ENCODE measurements at regions of chr4 and their contacts with region 1.

Region 1: GRCh38 chr4:93852680-93853079 is 24.1 kb downstream of the ATOH1 start:
- DNase-seq: no peak
- H3K4me3 ChIP-seq: no peak overlapping the region
- H3K27ac ChIP-seq: no peak overlapping the region
- H3K4me1 ChIP-seq: no peaks in the 10 kb centered on the region
- H3K27me3 ChIP-seq: peaks cover 8% of the 10 kb centered on the region
- CTCF ChIP-seq: no peak

Region 2: DNA sequence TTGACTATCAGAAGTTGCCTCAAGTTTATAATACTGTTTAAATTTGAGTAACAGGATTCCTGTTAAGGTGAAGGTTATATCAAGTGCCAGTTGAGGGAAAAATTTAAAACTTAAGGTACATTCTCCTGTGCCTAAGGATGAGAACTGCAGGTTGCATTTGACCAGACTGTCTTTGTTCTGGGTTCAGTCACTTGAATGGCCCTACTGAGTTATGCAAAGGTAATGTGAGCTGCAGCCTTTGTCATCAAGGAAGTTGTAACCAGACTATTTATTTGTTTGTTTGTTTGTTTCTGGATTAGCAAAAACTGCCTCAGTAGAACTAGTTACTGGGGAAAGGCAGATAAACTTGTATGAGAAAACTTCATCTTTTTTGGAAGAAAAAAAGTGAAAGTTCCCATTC is 107.8 kb after region 1 on chr4:
- CTCF ChIA-PET with region 1: no interaction called
- POLR2A ChIA-PET with region 1: no interaction called
- intact Hi-C with region 1: loop called (anchors 5 kb)
- DNase-seq: no peak
- H3K4me3 ChIP-seq: no peak overlapping the region
- H3K27ac ChIP-seq: no peak overlapping the region
- H3K4me1 ChIP-seq: no peaks in the 10 kb centered on the region
- H3K27me3 ChIP-seq: no peaks in the 10 kb centered on the region
- CTCF ChIP-seq: no peak

Region 3: DNA sequence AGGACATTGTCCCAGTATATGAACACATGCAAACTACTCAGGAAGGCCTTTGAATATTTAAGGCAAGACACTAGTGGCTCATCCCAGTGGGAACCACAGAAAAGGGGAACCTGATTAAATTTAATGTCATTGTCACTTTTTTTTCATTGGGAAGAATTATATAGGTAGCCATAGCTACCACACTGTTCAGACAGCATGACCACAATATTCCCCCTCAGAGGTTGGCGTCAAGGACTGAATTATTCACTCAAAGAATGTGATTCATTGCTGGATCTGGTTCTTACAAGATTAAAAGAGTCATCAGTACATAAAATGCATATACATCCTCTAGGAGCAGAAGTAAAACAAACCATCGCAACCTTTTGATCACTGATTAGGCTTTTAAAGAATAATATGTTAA is 263.0 kb after region 1 on chr4:
- CTCF ChIA-PET with region 1: no interaction called
- POLR2A ChIA-PET with region 1: no interaction called
- intact Hi-C with region 1: no loop called
- DNase-seq: no peak
- H3K4me3 ChIP-seq: no peak overlapping the region
- H3K27ac ChIP-seq: no peak overlapping the region
- H3K4me1 ChIP-seq: no peaks in the 10 kb centered on the region
- H3K27me3 ChIP-seq: no peaks in the 10 kb centered on the region
- CTCF ChIP-seq: no peak